H1 (cell line): ENCODE measurements at regions of chr4 and their contacts with region 1.

Region 1: GRCh38 chr4:17636696-17637622 is 22.5 kb downstream of the MED28 start:
- DNase-seq: peak; percentile 60 to 91
- H3K4me3 ChIP-seq: no peak overlapping the region
- H3K27ac ChIP-seq: no peak overlapping the region
- H3K4me1 ChIP-seq: 0 out of 7 replicates have a peak, but pooled peaks cover 0 to 3% (median 0%) of the 10 kb centered on the region in 4 experiments
- H3K27me3 ChIP-seq: no peaks in the 10 kb centered on the region
- CTCF ChIP-seq: peak; percentile 82 to 88 (median 88)
- EP300 ChIP-seq: no peak
- POLR2A ChIP-seq: 0 out of 3 replicates have a peak, but pooled peaks of 1 of the 2 experiments have one; percentile 2
- RAD21 ChIP-seq: peak; percentile 78 to 81

Region 2: DNA sequence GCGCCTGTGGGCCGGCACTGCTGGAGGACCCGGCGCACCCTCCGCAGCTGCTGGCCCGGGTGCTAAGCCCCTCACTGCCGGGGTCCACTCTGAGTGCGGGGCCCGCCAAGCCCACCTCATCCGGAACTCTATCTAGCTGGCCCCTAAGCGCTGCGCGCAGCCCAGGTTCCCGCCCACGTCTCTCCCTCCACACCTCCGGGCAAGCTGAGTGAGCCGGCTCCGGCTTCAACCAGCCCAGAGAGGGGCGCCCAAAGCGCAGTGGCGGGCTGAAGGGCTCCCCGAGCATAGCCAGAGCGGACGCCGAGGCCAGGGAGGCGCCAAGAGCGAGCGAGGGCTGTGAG is 200.2 kb before region 1 on chr4:
- CTCF ChIA-PET with region 1: no interaction called
- POLR2A ChIA-PET with region 1: no interaction called
- DNase-seq: no peak
- H3K4me3 ChIP-seq: no peak overlapping the region
- H3K27ac ChIP-seq: no peak overlapping the region
- H3K4me1 ChIP-seq: no peaks in the 10 kb centered on the region
- H3K27me3 ChIP-seq: no peaks in the 10 kb centered on the region
- CTCF ChIP-seq: no peak
- EP300 ChIP-seq: no peak
- POLR2A ChIP-seq: no peak
- RAD21 ChIP-seq: no peak

Region 3: DNA sequence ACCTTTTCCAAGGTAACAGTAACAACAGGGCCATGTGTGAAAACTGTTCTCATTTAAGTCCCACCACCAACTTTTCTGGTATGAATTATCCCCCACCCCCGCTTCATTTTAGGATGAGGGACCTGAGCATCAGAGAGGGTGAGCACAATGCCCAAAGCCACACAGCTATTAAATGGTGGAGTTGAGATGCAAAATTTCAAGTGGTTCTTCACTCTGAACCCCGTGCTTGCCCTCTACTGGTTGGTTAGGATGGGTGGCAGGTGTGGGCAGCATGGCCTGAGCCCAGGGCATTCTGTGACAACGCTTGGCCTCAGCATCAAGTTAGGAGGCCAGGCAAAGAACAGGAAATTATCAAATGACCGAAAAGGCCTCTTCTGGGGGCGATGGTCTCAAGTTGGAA is 11.0 kb after region 1 on chr4:
- CTCF ChIA-PET with region 1: interaction called, 14 read pairs
- POLR2A ChIA-PET with region 1: no interaction called
- DNase-seq: no peak
- H3K4me3 ChIP-seq: no peak overlapping the region
- H3K27ac ChIP-seq: no peak overlapping the region
- H3K4me1 ChIP-seq: no peaks in the 10 kb centered on the region
- H3K27me3 ChIP-seq: no peaks in the 10 kb centered on the region; a peak in 1 of 7 replicates
- CTCF ChIP-seq: peak; percentile 31 to 57 (median 54)
- EP300 ChIP-seq: no peak
- POLR2A ChIP-seq: no peak
- RAD21 ChIP-seq: peak; percentile 41 to 44; a peak in 2 of 4 replicates

Region 4: GRCh38 chr4:17762726-17763125 is 125.8 kb after region 1 on chr4:
- CTCF ChIA-PET with region 1: no interaction called
- POLR2A ChIA-PET with region 1: no interaction called
- DNase-seq: no peak
- H3K4me3 ChIP-seq: no peak overlapping the region
- H3K27ac ChIP-seq: no peak overlapping the region
- H3K4me1 ChIP-seq: peaks cover 0 to 7% (median 3%) of the 10 kb centered on the region in 4 experiments; a peak in 5 of 7 replicates
- H3K27me3 ChIP-seq: no peaks in the 10 kb centered on the region
- CTCF ChIP-seq: peak in 2 of 3 experiments; percentile 22 to 39; a peak in 1 of 4 replicates
- EP300 ChIP-seq: no peak
- POLR2A ChIP-seq: no peak
- RAD21 ChIP-seq: peak; percentile 37 to 50; a peak in 3 of 4 replicates

Region 5: DNA sequence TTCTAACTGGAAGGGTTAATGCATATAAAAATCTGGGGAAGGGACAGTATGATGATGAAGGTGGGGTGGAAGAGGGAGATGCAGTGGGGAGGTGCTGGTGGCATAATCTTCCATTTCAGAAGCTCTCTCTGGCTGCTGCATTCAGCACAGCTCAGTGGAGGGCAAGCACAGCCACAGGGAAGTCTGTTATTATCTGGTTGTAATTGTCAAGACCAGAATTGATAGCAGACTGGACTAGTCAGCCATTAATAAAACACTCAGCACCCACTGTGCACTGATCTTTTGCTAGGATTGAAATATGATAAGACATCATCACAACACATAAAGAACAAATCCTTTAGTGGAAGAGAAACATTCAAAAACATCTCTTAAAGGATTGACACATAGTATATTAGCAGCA is 798.8 kb after region 1 on chr4:
- CTCF ChIA-PET with region 1: no interaction called
- POLR2A ChIA-PET with region 1: no interaction called
- DNase-seq: no peak
- H3K4me3 ChIP-seq: no peak overlapping the region
- H3K27ac ChIP-seq: no peak overlapping the region
- H3K4me1 ChIP-seq: no peaks in the 10 kb centered on the region
- H3K27me3 ChIP-seq: no peaks in the 10 kb centered on the region
- CTCF ChIP-seq: no peak
- EP300 ChIP-seq: no peak
- POLR2A ChIP-seq: no peak
- RAD21 ChIP-seq: no peak